ENCODE measurements at regions of chr1 and their contacts with region 1.

Region 1: GRCh38 chr1:182614796-182615454 is 10.7 kb upstream of the RGS16 start:
- DNase-seq: peak in 1 of 2 experiments; percentile 75
- H3K4me3 ChIP-seq: peak overlapping the region; percentile 26 to 65 (median 52)
- H3K27ac ChIP-seq: peak overlapping the region; percentile 49; the same call in 1 of the 2 replicates
- H3K4me1 ChIP-seq: peaks cover 24 to 53% (median 31%) of the 10 kb centered on the region in 4 experiments
- H3K27me3 ChIP-seq: peaks cover 0 to 29% (median 14%) of the 10 kb centered on the region in 4 experiments; a peak in 6 of 7 replicates
- CTCF ChIP-seq: no peak
- EP300 ChIP-seq: no peak
- POLR2A ChIP-seq: no peak; a peak in 1 of 3 replicates
- RAD21 ChIP-seq: no peak

Region 2: DNA sequence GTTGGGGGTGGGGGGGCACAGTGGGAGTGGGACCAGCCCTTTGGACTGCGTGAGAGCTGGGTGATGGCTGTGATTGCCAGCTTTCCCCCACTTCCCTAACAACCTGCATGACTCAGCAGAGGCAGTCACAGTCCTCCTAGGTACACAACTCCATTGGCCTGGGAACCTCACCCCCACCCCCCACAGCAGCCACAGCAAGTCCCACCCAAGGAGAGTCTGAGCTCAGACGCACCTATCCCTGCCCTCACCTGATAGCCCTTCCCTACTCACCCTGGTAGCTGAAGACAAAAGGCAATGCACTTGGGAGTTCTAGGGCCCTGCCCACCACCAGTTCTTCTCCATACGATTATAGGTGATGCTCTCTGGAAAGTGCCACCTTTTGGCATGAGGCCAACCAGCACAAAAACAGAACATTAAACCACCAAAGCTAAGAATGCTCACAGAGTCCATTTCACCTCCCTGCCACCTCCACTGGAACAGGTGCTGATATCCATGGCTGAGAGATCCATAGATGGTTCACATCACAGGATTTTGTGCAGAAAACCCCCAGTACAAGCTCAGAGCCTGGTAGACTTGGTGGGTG is 742.3 kb before region 1 on chr1:
- CTCF ChIA-PET with region 1: no interaction called
- POLR2A ChIA-PET with region 1: no interaction called
- DNase-seq: no peak
- H3K4me3 ChIP-seq: no peak overlapping the region
- H3K27ac ChIP-seq: no peak overlapping the region
- H3K4me1 ChIP-seq: no peaks in the 10 kb centered on the region
- H3K27me3 ChIP-seq: no peaks in the 10 kb centered on the region
- CTCF ChIP-seq: no peak
- EP300 ChIP-seq: no peak
- POLR2A ChIP-seq: no peak
- RAD21 ChIP-seq: no peak

Region 3: GRCh38 chr1:182453626-182454025 is 161.3 kb before region 1 on chr1:
- CTCF ChIA-PET with region 1: no interaction called
- POLR2A ChIA-PET with region 1: no interaction called
- DNase-seq: no peak
- H3K4me3 ChIP-seq: no peak overlapping the region
- H3K27ac ChIP-seq: no peak overlapping the region
- H3K4me1 ChIP-seq: no peaks in the 10 kb centered on the region
- H3K27me3 ChIP-seq: no peaks in the 10 kb centered on the region
- CTCF ChIP-seq: no peak
- EP300 ChIP-seq: no peak
- POLR2A ChIP-seq: no peak
- RAD21 ChIP-seq: no peak

Region 4: DNA sequence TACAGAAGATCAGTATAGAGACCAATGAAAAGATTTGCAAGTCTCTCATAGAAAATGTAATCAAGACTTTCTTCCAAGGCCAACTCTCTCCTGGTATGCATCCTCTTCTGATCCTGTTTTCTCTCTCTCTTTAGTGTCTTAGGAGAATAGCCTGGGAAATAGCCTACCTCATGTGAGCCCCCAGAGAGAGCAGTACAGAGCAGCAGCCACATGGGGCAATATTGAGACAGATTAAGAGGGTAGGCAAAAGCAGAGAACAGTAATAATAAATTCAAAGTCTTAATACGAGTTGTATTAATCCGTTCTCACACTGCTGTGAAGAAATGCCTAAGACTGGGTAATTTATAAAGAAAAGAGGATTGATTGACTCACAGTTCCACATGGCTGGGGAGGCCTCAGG is 87.2 kb before region 1 on chr1:
- CTCF ChIA-PET with region 1: no interaction called
- POLR2A ChIA-PET with region 1: no interaction called
- DNase-seq: no peak
- H3K4me3 ChIP-seq: no peak overlapping the region
- H3K27ac ChIP-seq: no peak overlapping the region
- H3K4me1 ChIP-seq: no peaks in the 10 kb centered on the region
- H3K27me3 ChIP-seq: no peaks in the 10 kb centered on the region; a peak in 1 of 7 replicates
- CTCF ChIP-seq: no peak
- EP300 ChIP-seq: no peak
- POLR2A ChIP-seq: no peak
- RAD21 ChIP-seq: no peak

Region 5: GRCh38 chr1:182604169-182605164 is 10.5 kb before region 1 on chr1 and contains the start of gene RGS16:
- CTCF ChIA-PET with region 1: interaction called, 118 read pairs
- POLR2A ChIA-PET with region 1: interaction called, 231 read pairs
- DNase-seq: peak in 1 of 2 experiments; percentile 95
- H3K4me3 ChIP-seq: peak within 1 kb of the TSS; percentile 41 to 66 (median 50)
- H3K27ac ChIP-seq: peak within 1 kb of the TSS; percentile 34; the same call in 1 of the 2 replicates
- H3K4me1 ChIP-seq: peaks cover 4 to 19% (median 8%) of the 10 kb centered on the region in 4 experiments
- H3K27me3 ChIP-seq: peaks cover 0 to 31% (median 20%) of the 10 kb centered on the region in 4 experiments; a peak in 6 of 7 replicates
- CTCF ChIP-seq: no peak
- EP300 ChIP-seq: no peak
- POLR2A ChIP-seq: peak; percentile 86 to 87
- RAD21 ChIP-seq: no peak; a peak in 1 of 4 replicates
- total RNA-seq, gene RGS16: 8.1 and 9.8 TPM in 2 replicates

Region 6: GRCh38 chr1:182662121-182662890 is 47.4 kb after region 1 on chr1:
- CTCF ChIA-PET with region 1: interaction called, 3 read pairs
- POLR2A ChIA-PET with region 1: interaction called, 21 read pairs
- DNase-seq: no peak
- H3K4me3 ChIP-seq: peak overlapping the region in 1 of 4 experiments; percentile 35; a peak in 2 of 8 replicates
- H3K27ac ChIP-seq: no peak overlapping the region
- H3K4me1 ChIP-seq: peaks cover 5 to 21% (median 17%) of the 10 kb centered on the region in 4 experiments; a peak in 6 of 7 replicates
- H3K27me3 ChIP-seq: peaks cover 0 to 3% (median 0%) of the 10 kb centered on the region in 4 experiments; a peak in 2 of 7 replicates
- CTCF ChIP-seq: no peak
- EP300 ChIP-seq: no peak
- POLR2A ChIP-seq: no peak
- RAD21 ChIP-seq: no peak; a peak in 1 of 4 replicates

Region 7: DNA sequence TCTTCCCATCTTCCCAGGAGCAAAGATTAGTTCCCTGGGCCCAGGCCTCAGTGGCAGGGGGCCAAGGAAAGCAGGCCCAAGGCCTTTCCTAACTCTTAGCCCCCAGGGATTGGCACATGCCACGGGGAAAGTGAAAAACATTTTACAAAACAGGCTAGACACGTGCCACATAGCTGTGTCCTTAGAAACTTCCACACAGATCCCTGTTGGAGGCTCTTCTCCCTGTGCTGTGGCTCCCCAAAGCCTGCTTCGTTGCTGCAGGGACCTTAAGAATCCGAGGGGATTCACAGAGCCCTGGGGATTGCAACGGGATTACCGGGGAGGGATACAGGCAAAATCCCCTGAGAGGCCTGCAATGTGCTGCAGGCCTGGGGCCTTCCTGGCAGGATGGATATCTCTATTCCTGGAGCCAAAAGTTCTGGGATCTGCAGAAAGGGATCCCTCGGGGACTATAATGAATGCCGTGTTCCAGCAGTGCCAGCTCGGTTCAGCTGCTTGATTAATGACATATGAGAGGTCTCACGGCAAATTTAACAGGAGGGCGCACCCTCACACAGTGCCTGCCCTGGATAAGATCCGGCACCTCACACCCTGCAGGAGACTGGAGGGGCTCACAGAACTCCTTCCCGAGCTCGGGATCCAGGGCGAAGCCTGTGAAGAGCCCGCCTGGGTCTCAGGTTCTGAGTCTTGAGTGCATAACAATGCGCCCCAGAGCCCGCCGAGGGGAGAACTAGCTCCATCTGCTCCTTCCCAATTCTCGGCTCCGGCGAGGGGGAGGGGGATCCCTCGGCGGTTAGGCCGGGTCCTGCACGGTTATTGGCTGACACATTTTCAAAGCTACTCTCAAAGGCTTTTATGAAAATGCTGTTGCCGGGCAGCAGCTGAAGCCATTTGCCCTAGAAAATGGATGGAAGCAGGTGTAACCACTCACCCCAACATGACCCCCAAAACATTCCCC is 84.7 kb after region 1 on chr1:
- CTCF ChIA-PET with region 1: interaction called, 11 read pairs
- POLR2A ChIA-PET with region 1: interaction called, 31 read pairs
- DNase-seq: peak; percentile 50 to 86
- H3K4me3 ChIP-seq: peak overlapping the region; percentile 16 to 53 (median 27); a peak in 7 of 8 replicates
- H3K27ac ChIP-seq: peak overlapping the region; percentile 59
- H3K4me1 ChIP-seq: peaks cover 10 to 32% (median 16%) of the 10 kb centered on the region in 4 experiments
- H3K27me3 ChIP-seq: no peaks in the 10 kb centered on the region
- CTCF ChIP-seq: no peak
- EP300 ChIP-seq: no peak; a peak in 1 of 3 replicates
- POLR2A ChIP-seq: peak in 1 of 2 experiments; percentile 49; a peak in 1 of 3 replicates
- RAD21 ChIP-seq: peak in 1 of 2 experiments; percentile 38; a peak in 2 of 4 replicates

Region 8: GRCh38 chr1:182789138-182790076 is 174.5 kb after region 1 on chr1 and contains the start of gene NPL:
- CTCF ChIA-PET with region 1: interaction called, 1,131 read pairs
- POLR2A ChIA-PET with region 1: interaction called, 28 read pairs
- DNase-seq: peak in 1 of 2 experiments; percentile 87
- H3K4me3 ChIP-seq: peak within 1 kb of the TSS; percentile 46 to 65 (median 56)
- H3K27ac ChIP-seq: no peak within 1 kb of the TSS
- H3K4me1 ChIP-seq: no peaks in the 10 kb centered on the region
- H3K27me3 ChIP-seq: peaks cover 15 to 36% (median 24%) of the 10 kb centered on the region in 4 experiments
- CTCF ChIP-seq: no peak
- EP300 ChIP-seq: peak in 1 of 2 experiments; percentile 20; a peak in 1 of 3 replicates
- POLR2A ChIP-seq: peak in 1 of 2 experiments; percentile 69; a peak in 2 of 3 replicates
- RAD21 ChIP-seq: 0 out of 4 replicates have a peak, but pooled peaks of 1 of the 2 experiments have one; percentile 2
- total RNA-seq, gene NPL: 2.3 and 4.4 TPM in 2 replicates

Region 9: GRCh38 chr1:182869241-182869666 is 254.3 kb after region 1 on chr1:
- CTCF ChIA-PET with region 1: no interaction called
- POLR2A ChIA-PET with region 1: no interaction called
- DNase-seq: peak in 1 of 2 experiments; percentile 85
- H3K4me3 ChIP-seq: no peak overlapping the region
- H3K27ac ChIP-seq: peak overlapping the region; percentile 61
- H3K4me1 ChIP-seq: no peaks in the 10 kb centered on the region
- H3K27me3 ChIP-seq: no peaks in the 10 kb centered on the region
- CTCF ChIP-seq: no peak
- EP300 ChIP-seq: peak in 1 of 2 experiments; percentile 94; a peak in 2 of 3 replicates
- POLR2A ChIP-seq: 0 out of 3 replicates have a peak, but pooled peaks of 1 of the 2 experiments have one; percentile 31
- RAD21 ChIP-seq: no peak

Measured in H1 (cell line).